Dendritic cell treated with granulocyte-macrophage colony-stimulating factor and Interleukin-4, amounts not matched to agents 40 ng/mL and 50 ng/mL, for 4 days (primary cell): ENCODE measurements at regions of chr4 and their contacts with region 1.

Region 1: DNA sequence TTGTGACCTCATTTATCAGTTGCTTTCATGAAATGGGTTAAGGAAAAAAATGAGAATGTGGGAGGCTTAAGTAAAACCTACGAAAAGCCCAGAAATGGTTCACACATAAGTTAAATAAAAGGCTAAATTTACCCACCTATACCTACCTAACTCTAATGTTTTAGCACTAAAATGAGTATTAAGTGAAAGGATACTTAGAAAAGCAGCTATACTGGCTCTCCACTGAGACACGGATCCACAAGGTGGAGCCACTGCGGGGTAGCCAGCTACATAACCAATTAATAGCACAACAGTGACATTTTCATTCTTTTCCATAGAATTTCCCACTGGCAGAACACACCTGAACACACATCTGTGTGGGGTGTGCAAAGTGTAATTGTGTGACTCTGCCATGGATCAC is 101.9 kb downstream of the MAML3 start:
- H3K4me3 Mint-ChIP-seq: no peak overlapping the region
- H3K27ac Mint-ChIP-seq: no peak overlapping the region
- H3K4me1 Mint-ChIP-seq: peaks cover 51% of the 10 kb centered on the region
- H3K27me3 Mint-ChIP-seq: no peaks in the 10 kb centered on the region

Region 2: GRCh38 chr4:140085062-140085622 is 33.1 kb after region 1 on chr4:
- intact Hi-C with region 1: loop called (anchors 5 kb)
- H3K4me3 Mint-ChIP-seq: no peak overlapping the region
- H3K27ac Mint-ChIP-seq: no peak overlapping the region
- H3K4me1 Mint-ChIP-seq: peaks cover 44% of the 10 kb centered on the region
- H3K27me3 Mint-ChIP-seq: no peaks in the 10 kb centered on the region

Region 3: GRCh38 chr4:140252742-140253555 is 200.9 kb after region 1 on chr4:
- intact Hi-C with region 1: loop called (anchors 1 kb)
- H3K4me3 Mint-ChIP-seq: peak overlapping the region; percentile 70
- H3K27ac Mint-ChIP-seq: peak overlapping the region; percentile 65
- H3K4me1 Mint-ChIP-seq: peaks cover 28% of the 10 kb centered on the region
- H3K27me3 Mint-ChIP-seq: peaks cover 11% of the 10 kb centered on the region

Region 4: GRCh38 chr4:140523857-140524742 is 472.1 kb after region 1 on chr4 and contains the start of gene ELMOD2:
- intact Hi-C with region 1: no loop called
- H3K4me3 Mint-ChIP-seq: peak within 1 kb of the TSS; percentile 92
- H3K27ac Mint-ChIP-seq: peak within 1 kb of the TSS; percentile 91
- H3K4me1 Mint-ChIP-seq: peaks cover 6% of the 10 kb centered on the region
- H3K27me3 Mint-ChIP-seq: no peaks in the 10 kb centered on the region